PC-9 (cell line): ENCODE measurements at regions of chr12 and their contacts with region 1.

Region 1: DNA sequence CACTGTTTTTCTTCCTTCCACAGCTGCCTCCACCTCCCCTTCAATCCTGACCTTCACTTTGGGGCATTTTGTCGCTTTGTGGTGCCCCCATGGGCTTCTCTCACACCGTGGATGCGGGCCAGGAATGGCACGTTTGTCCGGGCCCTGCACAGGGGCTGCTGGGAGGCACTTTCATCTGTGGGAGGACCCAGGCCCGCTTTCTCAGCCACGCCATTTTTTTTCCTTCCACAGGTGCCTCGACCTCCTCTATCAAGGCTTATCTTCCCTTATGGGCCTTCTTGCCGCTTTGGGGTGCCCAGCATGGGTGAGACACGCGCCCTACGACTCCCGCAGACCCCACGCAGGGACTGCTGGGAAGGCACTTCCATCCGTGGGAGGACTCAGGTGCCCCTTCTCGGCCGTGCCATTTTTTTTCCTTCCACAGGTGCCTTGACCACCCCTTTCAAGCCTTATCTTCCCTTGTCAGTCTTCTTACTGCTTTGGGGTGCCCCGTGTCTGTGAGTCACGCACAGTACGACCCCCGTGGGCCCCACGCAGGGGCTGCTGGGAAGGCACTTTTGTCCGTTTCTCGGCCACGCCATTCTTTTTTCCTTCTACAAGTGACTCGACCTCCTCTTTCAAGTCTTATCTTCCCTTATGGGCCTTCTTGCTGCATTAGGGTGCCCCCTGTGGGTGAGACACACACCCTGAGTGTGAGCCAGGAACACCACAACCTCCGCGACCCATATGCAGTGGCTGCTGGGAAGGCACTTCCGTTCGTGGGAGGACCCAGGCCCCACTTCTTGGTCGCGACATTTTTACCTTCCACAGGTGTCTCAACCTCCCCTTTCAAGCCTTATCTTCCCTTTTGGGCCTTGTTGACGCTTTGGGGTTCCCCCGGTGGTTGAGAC is 270.7 kb downstream of the ALG10 start:
- DNase-seq: peak in 1 of 2 experiments; percentile 37
- H3K4me3 ChIP-seq: no peak overlapping the region
- H3K27ac ChIP-seq: no peak overlapping the region
- H3K4me1 ChIP-seq: no peaks in the 10 kb centered on the region
- H3K27me3 ChIP-seq: peaks cover 63% of the 10 kb centered on the region
- CTCF ChIP-seq: peak; percentile 66

Region 2: GRCh38 chr12:34354239-34355200 is 61.5 kb after region 1 on chr12:
- CTCF ChIA-PET with region 1: no interaction called
- POLR2A ChIA-PET with region 1: no interaction called
- intact Hi-C with region 1: no loop called
- DNase-seq: peak in 1 of 2 experiments; percentile 19
- H3K4me3 ChIP-seq: no peak overlapping the region
- H3K27ac ChIP-seq: no peak overlapping the region
- H3K4me1 ChIP-seq: no peaks in the 10 kb centered on the region
- H3K27me3 ChIP-seq: peaks cover 81% of the 10 kb centered on the region
- CTCF ChIP-seq: no peak

Region 3: GRCh38 chr12:34389378-34390170 is 96.6 kb after region 1 on chr12:
- CTCF ChIA-PET with region 1: no interaction called
- POLR2A ChIA-PET with region 1: no interaction called
- intact Hi-C with region 1: loop called (anchors 10 kb)
- DNase-seq: no peak
- H3K4me3 ChIP-seq: no peak overlapping the region
- H3K27ac ChIP-seq: no peak overlapping the region
- H3K4me1 ChIP-seq: no peaks in the 10 kb centered on the region
- H3K27me3 ChIP-seq: peaks cover 100% of the 10 kb centered on the region
- CTCF ChIP-seq: no peak